Activated CD8-positive, alpha-beta T cell treated with anti-CD3 and anti-CD28 coated beads for 36 hours (primary cell): ENCODE measurements at regions of chr3 and their contacts with region 1.

Region 1: GRCh38 chr3:170180908-170181879 is at the start of gene PHC3:
- DNase-seq: peak; percentile 94
- ATAC-seq: peak; percentile 82
- H3K4me3 Mint-ChIP-seq: peak within 1 kb of the TSS; percentile 86
- H3K27ac Mint-ChIP-seq: peak within 1 kb of the TSS; percentile 100
- H3K4me1 Mint-ChIP-seq: peaks cover 26% of the 10 kb centered on the region
- H3K27me3 Mint-ChIP-seq: no peaks in the 10 kb centered on the region
- CTCF ChIP-seq: no peak
- total RNA-seq, gene PHC3: 50.1 to 53.0 TPM

Region 2: DNA sequence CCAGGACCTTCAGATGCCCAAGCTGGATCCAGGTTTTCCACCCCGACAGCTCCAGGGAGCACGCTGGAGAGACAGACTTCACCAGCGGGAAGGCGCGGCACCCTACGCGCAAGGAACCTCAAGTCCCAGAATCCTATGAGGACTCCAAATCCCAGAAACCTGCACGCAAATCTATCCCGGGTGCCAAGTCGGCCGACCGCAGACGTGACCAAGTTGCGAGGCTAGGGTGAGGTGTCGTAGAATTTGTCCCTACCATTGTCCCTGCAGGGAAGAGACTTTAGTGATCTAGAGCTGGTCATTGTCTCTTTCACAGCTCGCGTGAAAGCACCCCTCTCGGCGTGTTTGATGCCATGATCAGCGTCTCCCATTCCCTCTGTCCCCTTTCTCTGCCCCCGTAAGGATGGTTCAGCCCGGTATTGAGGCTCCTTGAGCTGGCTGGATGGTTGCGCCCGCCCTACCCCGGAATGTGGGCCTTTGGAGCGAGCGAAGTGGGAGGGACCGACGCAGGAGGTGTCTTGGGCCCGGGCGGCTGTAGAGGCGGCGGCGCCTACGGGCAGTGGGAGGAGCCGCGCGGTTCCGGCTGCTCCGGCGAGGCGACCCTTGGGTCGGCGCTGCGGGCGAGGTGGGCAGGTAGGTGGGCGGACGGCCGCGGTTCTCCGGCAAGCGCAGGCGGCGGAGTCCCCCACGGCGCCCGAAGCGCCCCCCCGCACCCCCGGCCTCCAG is 40.9 kb after region 1 on chr3 and contains the start of gene PRKCI:
- CTCF ChIA-PET with region 1: interaction called, 4 read pairs
- POLR2A ChIA-PET with region 1: interaction called, 16 read pairs
- intact Hi-C with region 1: no loop called
- DNase-seq: peak; percentile 93
- ATAC-seq: peak; percentile 95
- H3K4me3 Mint-ChIP-seq: peak within 1 kb of the TSS; percentile 91
- H3K27ac Mint-ChIP-seq: peak within 1 kb of the TSS; percentile 94
- H3K4me1 Mint-ChIP-seq: peaks cover 27% of the 10 kb centered on the region
- H3K27me3 Mint-ChIP-seq: no peaks in the 10 kb centered on the region
- CTCF ChIP-seq: no peak
- total RNA-seq, gene PRKCI: 17.4 to 21.3 TPM

Region 3: DNA sequence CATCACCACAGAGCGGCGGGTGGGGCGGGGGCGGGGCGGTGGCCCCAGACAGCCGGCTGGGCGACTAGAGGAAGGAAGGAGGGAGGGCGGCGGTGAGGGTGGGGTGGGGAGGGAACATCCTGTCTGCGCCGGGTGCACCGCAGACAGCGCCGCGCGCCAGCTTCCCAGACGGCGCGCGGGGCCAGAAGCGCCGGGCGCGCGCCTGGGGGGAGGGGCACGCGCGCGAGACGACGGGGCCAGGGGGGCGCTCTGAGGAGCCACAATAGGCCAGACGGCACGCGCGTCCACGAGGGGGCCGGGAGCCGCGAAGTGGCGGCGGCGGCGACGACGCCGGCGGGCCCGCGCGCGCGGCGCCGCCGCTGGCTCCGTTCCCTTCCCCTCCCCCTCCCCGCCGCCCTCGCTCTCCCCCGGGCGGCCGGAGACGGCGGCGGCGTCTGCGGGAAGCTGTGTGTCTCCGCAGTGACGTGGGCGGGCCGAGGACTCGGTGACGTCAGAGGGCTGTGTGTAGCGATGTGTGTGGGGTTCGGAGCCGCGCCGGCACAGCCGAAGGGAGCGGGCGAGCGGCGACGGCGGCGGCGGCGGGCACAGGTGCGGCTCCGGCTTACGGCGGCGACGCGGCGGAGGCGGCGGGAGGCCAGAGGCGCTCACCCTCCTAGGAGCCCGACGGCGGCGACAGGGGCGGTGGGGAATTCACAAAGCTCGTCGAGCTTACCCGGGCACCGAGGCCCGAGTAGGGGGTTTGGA is 176.2 kb after region 1 on chr3 and contains the start of gene SKIL:
- CTCF ChIA-PET with region 1: interaction called, 3 read pairs
- POLR2A ChIA-PET with region 1: interaction called, 16 read pairs
- intact Hi-C with region 1: loop called (anchors 10 kb)
- DNase-seq: peak; percentile 96
- ATAC-seq: peak; percentile 74
- H3K4me3 Mint-ChIP-seq: peak within 1 kb of the TSS; percentile 78
- H3K27ac Mint-ChIP-seq: peak within 1 kb of the TSS; percentile 96
- H3K4me1 Mint-ChIP-seq: peaks cover 48% of the 10 kb centered on the region
- H3K27me3 Mint-ChIP-seq: no peaks in the 10 kb centered on the region
- CTCF ChIP-seq: no peak
- total RNA-seq, gene SKIL: 13.2 to 14.2 TPM